ENCODE measurements at regions of chr6 and their contacts with region 1.

Region 1: DNA sequence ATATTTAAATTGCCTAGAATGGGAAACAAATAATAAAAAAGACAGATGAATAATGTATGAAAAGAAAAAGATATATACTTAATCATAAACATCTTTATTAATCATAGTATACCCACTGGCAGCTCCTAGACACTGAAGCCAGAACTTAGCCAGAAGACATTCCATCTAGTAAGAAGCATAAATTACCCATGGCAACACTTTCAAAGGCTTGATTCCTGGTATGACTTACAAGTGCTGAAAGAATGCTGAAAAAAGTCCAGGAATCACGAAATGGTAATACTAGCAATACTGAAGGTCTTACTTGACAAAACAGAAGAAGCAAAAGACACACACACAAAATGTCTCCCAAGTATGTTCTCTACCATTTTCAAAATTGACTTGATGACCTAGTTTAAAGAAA is 38.0 kb downstream of the RWDD2A start:
- DNase-seq: no peak

Region 2: DNA sequence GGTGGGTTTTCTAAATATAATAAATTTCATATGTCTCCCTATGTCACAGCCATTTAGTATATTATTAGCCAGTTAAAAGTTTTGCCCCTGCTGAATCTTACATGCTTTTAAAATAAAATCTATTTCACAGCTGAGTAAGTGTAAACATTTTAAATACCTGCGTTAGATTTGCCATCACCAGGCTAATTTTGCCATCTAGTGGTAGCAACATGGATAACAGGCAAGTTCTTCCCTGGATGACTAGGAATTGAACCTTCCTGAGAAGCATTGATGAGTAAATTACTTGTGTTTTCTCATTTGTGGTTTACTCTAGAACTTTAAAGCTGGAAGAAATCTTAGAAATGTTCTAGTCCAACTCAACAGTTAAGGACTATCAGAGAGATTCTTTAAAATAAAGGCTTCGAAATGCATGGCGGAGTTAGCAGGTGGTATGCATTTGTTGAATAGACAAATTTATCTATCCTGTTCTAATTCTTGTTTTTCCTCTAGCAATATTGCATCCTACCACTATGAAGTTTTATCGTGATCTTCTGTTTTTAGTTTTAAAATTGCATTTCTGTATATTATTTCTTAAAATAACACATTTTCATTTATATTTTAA is 283.8 kb after region 1 on chr6:
- in situ Hi-C with region 1: loop called (anchors 10 kb)
- DNase-seq: peak; percentile 71